ENCODE measurements at regions of chr6 and their contacts with region 1.

Region 1: GRCh38 chr6:8219352-8219943 is 117.1 kb upstream of the EEF1E1 start:
- DNase-seq: peak in 7 of 9 donors; percentile 4 to 53 (median 32)
- ATAC-seq: peak; percentile 75
- H3K4me3 ChIP-seq: no peak overlapping the region
- H3K4me3 Mint-ChIP-seq: no peak overlapping the region
- H3K27ac ChIP-seq: no peak overlapping the region
- H3K27ac Mint-ChIP-seq: no peak overlapping the region
- H3K4me1 ChIP-seq: no peaks in the 10 kb centered on the region
- H3K4me1 Mint-ChIP-seq: no peaks in the 10 kb centered on the region
- H3K27me3 ChIP-seq: no peaks in the 10 kb centered on the region
- H3K27me3 Mint-ChIP-seq: peaks cover 5 to 19% (median 9%) of the 10 kb centered on the region in 5 donors

Region 2: DNA sequence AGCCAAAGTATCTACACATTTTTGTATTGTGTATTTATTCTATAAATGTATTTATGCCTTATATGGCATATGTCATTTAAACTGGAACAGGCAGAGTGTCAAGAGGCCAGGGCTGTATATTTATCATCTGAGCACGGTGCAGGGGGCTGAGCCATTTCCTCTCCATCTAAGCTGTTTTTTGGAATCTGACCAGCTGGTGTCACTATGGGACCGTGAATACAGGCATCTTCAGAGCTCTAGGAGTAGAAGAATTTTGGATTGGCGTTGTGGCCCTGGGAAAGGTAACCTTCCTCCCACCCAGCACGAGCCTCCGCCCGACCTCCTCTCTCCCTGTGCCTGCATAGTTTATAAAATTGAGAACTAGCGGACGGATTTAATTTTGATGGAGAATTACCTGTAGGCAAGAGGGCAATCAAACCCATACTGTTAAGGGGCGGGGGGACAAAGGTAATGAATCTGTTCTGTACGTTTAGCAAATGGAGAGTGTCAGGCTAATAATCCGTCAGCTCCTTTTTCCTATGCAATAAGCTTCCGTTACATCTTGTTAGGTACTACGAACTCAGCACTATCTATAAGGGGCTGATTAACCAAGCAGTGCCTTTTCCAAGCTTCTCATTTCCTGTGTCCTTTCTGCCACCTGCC is 88.1 kb before region 1 on chr6:
- CTCF ChIA-PET with region 1: interaction called, 16 read pairs
- POLR2A ChIA-PET with region 1: no interaction called
- intact Hi-C with region 1: loop called (anchors 1 kb)
- DNase-seq: peak in 7 of 9 donors; percentile 11 to 48 (median 28)
- ATAC-seq: peak; percentile 68
- H3K4me3 ChIP-seq: no peak overlapping the region
- H3K4me3 Mint-ChIP-seq: no peak overlapping the region
- H3K27ac ChIP-seq: no peak overlapping the region
- H3K27ac Mint-ChIP-seq: no peak overlapping the region
- H3K4me1 ChIP-seq: no peaks in the 10 kb centered on the region
- H3K4me1 Mint-ChIP-seq: no peaks in the 10 kb centered on the region
- H3K27me3 ChIP-seq: no peaks in the 10 kb centered on the region
- H3K27me3 Mint-ChIP-seq: peaks cover 7 to 26% (median 14%) of the 10 kb centered on the region in 5 donors

Region 3: GRCh38 chr6:8192067-8192466 is 27.4 kb before region 1 on chr6:
- CTCF ChIA-PET with region 1: no interaction called
- POLR2A ChIA-PET with region 1: no interaction called
- intact Hi-C with region 1: no loop called
- DNase-seq: no peak
- ATAC-seq: no peak
- H3K4me3 ChIP-seq: no peak overlapping the region
- H3K4me3 Mint-ChIP-seq: no peak overlapping the region
- H3K27ac ChIP-seq: no peak overlapping the region
- H3K27ac Mint-ChIP-seq: no peak overlapping the region
- H3K4me1 ChIP-seq: no peaks in the 10 kb centered on the region
- H3K4me1 Mint-ChIP-seq: no peaks in the 10 kb centered on the region
- H3K27me3 ChIP-seq: no peaks in the 10 kb centered on the region
- H3K27me3 Mint-ChIP-seq: peaks cover 3 to 35% (median 30%) of the 10 kb centered on the region in 5 donors

Measured in naive thymus-derived CD4-positive, alpha-beta T cell (primary cell).